Panc1 (cell line): ENCODE measurements at regions of chr5 and their contacts with region 1.

Region 1: DNA sequence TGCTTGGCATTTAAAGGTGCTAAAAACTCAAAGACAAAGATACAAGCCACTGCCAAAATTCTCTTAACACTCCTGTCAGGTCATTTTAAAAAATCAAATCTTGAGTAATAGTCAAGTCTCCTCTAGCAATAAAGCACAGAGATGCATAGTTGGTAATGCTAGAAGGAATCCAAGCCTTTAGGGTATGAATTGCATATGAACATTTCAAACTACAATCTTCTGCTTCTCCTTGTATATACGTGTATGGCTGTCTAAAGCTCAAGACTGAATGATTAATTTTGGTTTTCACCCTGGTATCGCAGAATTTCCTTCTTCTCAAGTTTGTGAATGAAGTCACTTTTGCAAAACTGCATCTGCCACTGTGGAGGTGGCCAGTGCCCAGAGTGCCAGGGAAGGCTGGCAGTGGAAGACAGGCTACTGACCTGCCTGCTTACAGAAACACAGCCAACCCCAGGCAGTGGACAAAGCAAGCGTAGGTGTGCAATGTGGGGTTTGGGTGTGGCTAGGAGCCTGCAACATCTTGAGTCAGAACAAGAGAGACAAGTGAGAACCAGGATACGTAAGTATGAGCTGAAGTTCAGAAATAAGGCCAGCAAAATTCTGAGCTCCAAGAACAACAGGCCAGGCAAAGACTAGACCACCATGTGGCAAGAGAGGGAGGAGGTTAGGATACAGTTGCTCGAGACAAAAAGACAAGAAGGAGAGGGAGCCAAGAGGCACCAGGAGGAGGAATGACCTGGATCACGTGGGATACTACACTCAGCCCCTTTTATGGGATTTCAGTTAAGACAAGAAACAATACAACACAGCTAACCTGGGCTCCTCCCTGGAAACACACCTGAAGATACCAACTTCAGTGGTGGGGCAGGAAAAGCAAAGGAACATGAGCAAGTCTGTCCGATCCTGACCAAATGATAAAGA is 22.6 kb downstream of the MYO10 start:
- DNase-seq: no peak
- ATAC-seq: peak; percentile 66
- H3K4me3 ChIP-seq: peak overlapping the region; percentile 23 to 34
- H3K27ac ChIP-seq: peak overlapping the region; percentile 90
- H3K4me1 ChIP-seq: peaks cover 78% of the 10 kb centered on the region
- H3K27me3 ChIP-seq: no peaks in the 10 kb centered on the region
- CTCF ChIP-seq: no peak

Region 2: DNA sequence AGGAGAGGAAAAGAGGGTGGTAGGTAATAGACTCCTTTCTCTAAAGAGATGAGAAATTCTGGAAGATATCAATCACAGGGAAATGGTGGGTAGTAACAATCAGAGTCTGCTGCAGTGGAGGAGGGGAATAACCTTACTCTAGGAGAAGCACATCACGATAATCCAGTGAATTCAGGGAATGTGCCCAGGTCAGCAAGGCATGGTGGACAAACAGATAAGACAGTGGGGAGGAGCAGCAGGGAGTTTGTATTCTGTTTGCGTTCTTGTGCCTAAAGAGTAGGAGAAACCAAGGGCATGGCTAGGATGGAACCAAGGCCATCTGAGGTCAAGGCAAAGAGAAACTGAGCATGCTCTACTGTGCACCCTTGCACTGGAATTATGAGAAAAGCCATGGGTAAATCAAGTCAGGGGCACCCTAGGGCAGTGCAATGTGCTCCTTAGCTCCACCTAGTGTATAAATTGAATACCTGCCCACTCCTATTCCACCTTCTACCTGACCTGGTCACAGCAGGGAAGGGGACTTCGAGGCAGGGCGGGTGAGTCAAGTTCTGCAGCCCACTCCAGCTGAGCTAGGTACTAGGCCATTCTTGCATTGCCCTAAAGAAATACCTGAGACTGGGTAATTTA is 328.3 kb before region 1 on chr5:
- CTCF ChIA-PET with region 1: no interaction called
- POLR2A ChIA-PET with region 1: interaction called, 12 read pairs
- in situ Hi-C with region 1: no loop called
- intact Hi-C with region 1: no loop called
- DNase-seq: no peak
- ATAC-seq: peak; percentile 81
- H3K4me3 ChIP-seq: no peak overlapping the region
- H3K27ac ChIP-seq: no peak overlapping the region
- H3K4me1 ChIP-seq: no peaks in the 10 kb centered on the region
- H3K27me3 ChIP-seq: no peaks in the 10 kb centered on the region
- CTCF ChIP-seq: peak; percentile 84

Region 3: DNA sequence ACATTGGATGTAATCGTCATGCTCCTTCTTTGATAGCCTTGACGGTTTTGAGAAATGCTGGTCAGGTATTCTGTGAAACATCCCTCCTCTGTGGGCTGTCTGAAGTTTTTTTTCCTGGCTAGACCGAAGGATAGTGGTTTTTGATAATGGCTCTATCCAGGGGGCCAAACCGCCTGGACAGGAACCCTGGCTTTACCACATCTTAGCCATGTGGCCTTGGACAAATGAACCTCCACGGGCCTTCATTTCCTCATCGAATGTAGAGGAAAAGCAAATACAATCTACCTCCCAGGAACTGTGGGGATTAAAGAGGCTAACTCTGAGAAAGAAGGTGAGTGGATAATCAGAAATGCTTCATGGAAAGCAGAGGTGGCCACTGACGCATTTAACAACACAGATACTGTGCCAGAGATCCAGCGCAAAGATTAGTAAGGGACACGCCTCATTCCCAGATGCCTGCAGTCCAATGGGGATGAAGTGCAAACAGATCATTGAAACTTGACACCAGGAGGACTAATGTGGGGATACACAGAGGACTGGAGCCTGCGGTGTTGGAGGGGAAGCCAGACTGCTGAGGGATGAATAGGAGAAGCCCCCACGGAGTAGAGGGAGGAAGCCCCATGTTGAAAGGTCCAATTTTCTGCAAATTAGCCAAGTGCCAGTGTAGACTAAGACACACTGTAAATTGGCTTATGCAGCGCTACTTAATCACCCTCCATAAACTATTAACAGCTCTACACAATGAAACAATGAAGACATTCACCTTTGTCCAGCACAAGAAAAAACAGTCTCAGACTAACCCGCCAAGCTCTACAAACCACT is 19.0 kb before region 1 on chr5:
- CTCF ChIA-PET with region 1: no interaction called
- POLR2A ChIA-PET with region 1: interaction called, 10 read pairs
- in situ Hi-C with region 1: no loop called
- intact Hi-C with region 1: no loop called
- DNase-seq: peak; percentile 79
- ATAC-seq: peak; percentile 84
- H3K4me3 ChIP-seq: peak overlapping the region; percentile 2 to 47; a peak in 3 of 4 replicates
- H3K27ac ChIP-seq: peak overlapping the region; percentile 98
- H3K4me1 ChIP-seq: peaks cover 89% of the 10 kb centered on the region
- H3K27me3 ChIP-seq: no peaks in the 10 kb centered on the region
- CTCF ChIP-seq: no peak

Region 4: GRCh38 chr5:17154211-17154996 is 241.0 kb after region 1 on chr5:
- CTCF ChIA-PET with region 1: interaction called, 12 read pairs
- POLR2A ChIA-PET with region 1: no interaction called
- in situ Hi-C with region 1: no loop called
- intact Hi-C with region 1: no loop called
- DNase-seq: peak; percentile 22
- ATAC-seq: no peak
- H3K4me3 ChIP-seq: no peak overlapping the region
- H3K27ac ChIP-seq: no peak overlapping the region
- H3K4me1 ChIP-seq: no peaks in the 10 kb centered on the region
- H3K27me3 ChIP-seq: no peaks in the 10 kb centered on the region
- CTCF ChIP-seq: no peak